ENCODE measurements at regions of chr9 and their contacts with region 1.

Region 1: GRCh38 chr9:114681594-114682332 is at the start of gene TEX48:
- DNase-seq: peak; percentile 75
- ATAC-seq: peak; percentile 89
- H3K4me3 ChIP-seq: no peak within 1 kb of the TSS
- H3K4me3 Mint-ChIP-seq: no peak within 1 kb of the TSS
- H3K27ac ChIP-seq: no peak within 1 kb of the TSS
- H3K27ac Mint-ChIP-seq: no peak within 1 kb of the TSS
- H3K4me1 ChIP-seq: peaks cover 0 to 4% of the 10 kb centered on the region in 2 donors
- H3K4me1 Mint-ChIP-seq: peaks cover 2% of the 10 kb centered on the region
- H3K27me3 ChIP-seq: peaks cover 0 to 15% (median 8%) of the 10 kb centered on the region in 4 experiments
- H3K27me3 Mint-ChIP-seq: peaks cover 39% of the 10 kb centered on the region
- CTCF ChIP-seq: peak; percentile 77
- total RNA-seq, gene TEX48: not detected in 2 replicates

Region 2: DNA sequence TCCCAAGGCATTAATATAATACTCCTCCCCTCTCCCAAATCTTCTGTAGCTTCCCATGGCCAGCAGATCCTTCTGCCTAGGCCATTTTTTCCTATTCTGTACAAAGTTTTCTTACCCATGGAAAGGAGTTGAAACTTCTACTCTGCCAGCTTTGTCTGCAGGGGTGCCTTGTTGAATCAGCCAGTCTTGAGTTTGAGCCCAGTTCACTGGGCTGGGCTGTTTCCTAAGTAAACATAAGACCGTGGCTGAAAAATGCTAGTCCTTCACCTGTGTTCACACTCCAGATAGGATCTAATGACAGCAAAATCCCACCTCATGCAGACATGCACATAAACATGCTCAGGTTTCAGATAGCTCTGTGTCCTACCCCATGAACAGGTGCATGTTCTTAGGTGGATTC is 10.2 kb before region 1 on chr9:
- CTCF ChIA-PET with region 1: interaction called, 13 read pairs
- POLR2A ChIA-PET with region 1: no interaction called
- intact Hi-C with region 1: no loop called
- DNase-seq: no peak
- ATAC-seq: no peak
- H3K4me3 ChIP-seq: no peak overlapping the region
- H3K4me3 Mint-ChIP-seq: no peak overlapping the region
- H3K27ac ChIP-seq: no peak overlapping the region
- H3K27ac Mint-ChIP-seq: no peak overlapping the region
- H3K4me1 ChIP-seq: no peaks in the 10 kb centered on the region
- H3K4me1 Mint-ChIP-seq: no peaks in the 10 kb centered on the region
- H3K27me3 ChIP-seq: no peaks in the 10 kb centered on the region
- H3K27me3 Mint-ChIP-seq: peaks cover 35% of the 10 kb centered on the region
- CTCF ChIP-seq: no peak

Region 3: GRCh38 chr9:114738581-114739316 is 57.0 kb after region 1 on chr9:
- CTCF ChIA-PET with region 1: interaction called, 28 read pairs
- POLR2A ChIA-PET with region 1: no interaction called
- intact Hi-C with region 1: loop called (anchors 1 kb)
- DNase-seq: peak; percentile 88
- ATAC-seq: peak; percentile 92
- H3K4me3 ChIP-seq: no peak overlapping the region
- H3K4me3 Mint-ChIP-seq: no peak overlapping the region
- H3K27ac ChIP-seq: no peak overlapping the region
- H3K27ac Mint-ChIP-seq: no peak overlapping the region
- H3K4me1 ChIP-seq: peaks cover 7 to 8% of the 10 kb centered on the region in 2 donors
- H3K4me1 Mint-ChIP-seq: peaks cover 13% of the 10 kb centered on the region
- H3K27me3 ChIP-seq: peaks cover 0 to 3% (median 1%) of the 10 kb centered on the region in 4 experiments
- H3K27me3 Mint-ChIP-seq: peaks cover 5% of the 10 kb centered on the region
- CTCF ChIP-seq: peak; percentile 91

Region 4: GRCh38 chr9:114759512-114760341 is 78.0 kb after region 1 on chr9:
- CTCF ChIA-PET with region 1: no interaction called
- POLR2A ChIA-PET with region 1: no interaction called
- intact Hi-C with region 1: no loop called
- DNase-seq: no peak
- ATAC-seq: no peak
- H3K4me3 ChIP-seq: no peak overlapping the region
- H3K4me3 Mint-ChIP-seq: no peak overlapping the region
- H3K27ac ChIP-seq: no peak overlapping the region
- H3K27ac Mint-ChIP-seq: no peak overlapping the region
- H3K4me1 ChIP-seq: peaks cover 5 to 12% of the 10 kb centered on the region in 2 donors
- H3K4me1 Mint-ChIP-seq: peaks cover 24% of the 10 kb centered on the region
- H3K27me3 ChIP-seq: peaks cover 0 to 4% (median 0%) of the 10 kb centered on the region in 4 experiments
- H3K27me3 Mint-ChIP-seq: peaks cover 17% of the 10 kb centered on the region
- CTCF ChIP-seq: no peak

Measured in B cell (primary cell).